ENCODE measurements at regions of chr10 and their contacts with region 1.

Region 1: DNA sequence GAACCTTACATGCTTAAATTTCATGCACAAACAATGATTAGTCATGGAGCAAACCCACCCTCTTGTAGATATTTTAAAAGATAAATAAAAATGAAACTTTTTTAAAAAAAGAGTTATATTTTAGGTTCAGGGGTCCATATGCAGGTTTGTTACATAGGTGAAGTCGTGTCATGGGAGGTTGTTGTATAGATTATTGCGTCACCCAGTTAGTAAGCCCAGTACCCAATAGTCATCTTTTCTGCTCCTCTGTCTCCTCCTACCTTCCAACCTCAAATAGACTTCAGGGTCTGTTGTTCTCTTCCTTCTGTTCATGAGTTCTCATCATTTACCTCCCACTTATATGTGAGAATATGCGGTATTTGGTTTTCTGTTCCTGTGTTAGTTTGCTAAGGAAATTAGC is 486.6 kb downstream of the PCDH15 start:
- DNase-seq: no peak
- ATAC-seq: no peak
- H3K4me3 Mint-ChIP-seq: no peak overlapping the region
- H3K27ac Mint-ChIP-seq: no peak overlapping the region
- H3K4me1 Mint-ChIP-seq: no peaks in the 10 kb centered on the region
- H3K27me3 Mint-ChIP-seq: no peaks in the 10 kb centered on the region
- CTCF ChIP-seq: no peak

Region 2: GRCh38 chr10:53754596-53755250 is 559.7 kb before region 1 on chr10:
- CTCF ChIA-PET with region 1: no interaction called
- POLR2A ChIA-PET with region 1: no interaction called
- intact Hi-C with region 1: no loop called
- DNase-seq: no peak
- ATAC-seq: no peak
- H3K4me3 Mint-ChIP-seq: no peak overlapping the region
- H3K27ac Mint-ChIP-seq: no peak overlapping the region
- H3K4me1 Mint-ChIP-seq: no peaks in the 10 kb centered on the region
- H3K27me3 Mint-ChIP-seq: no peaks in the 10 kb centered on the region
- CTCF ChIP-seq: no peak

Region 3: GRCh38 chr10:54234832-54235231 is 79.6 kb before region 1 on chr10:
- CTCF ChIA-PET with region 1: no interaction called
- POLR2A ChIA-PET with region 1: no interaction called
- intact Hi-C with region 1: loop called (anchors 10 kb)
- DNase-seq: no peak
- ATAC-seq: no peak
- H3K4me3 Mint-ChIP-seq: no peak overlapping the region
- H3K27ac Mint-ChIP-seq: no peak overlapping the region
- H3K4me1 Mint-ChIP-seq: no peaks in the 10 kb centered on the region
- H3K27me3 Mint-ChIP-seq: no peaks in the 10 kb centered on the region
- CTCF ChIP-seq: no peak

Measured in activated B cell treated with CpG ODN at 0.5 μM for 24 hours (primary cell).